MCF 10A (cell line): ENCODE measurements at regions of chr4 and their contacts with region 1.

Region 1: DNA sequence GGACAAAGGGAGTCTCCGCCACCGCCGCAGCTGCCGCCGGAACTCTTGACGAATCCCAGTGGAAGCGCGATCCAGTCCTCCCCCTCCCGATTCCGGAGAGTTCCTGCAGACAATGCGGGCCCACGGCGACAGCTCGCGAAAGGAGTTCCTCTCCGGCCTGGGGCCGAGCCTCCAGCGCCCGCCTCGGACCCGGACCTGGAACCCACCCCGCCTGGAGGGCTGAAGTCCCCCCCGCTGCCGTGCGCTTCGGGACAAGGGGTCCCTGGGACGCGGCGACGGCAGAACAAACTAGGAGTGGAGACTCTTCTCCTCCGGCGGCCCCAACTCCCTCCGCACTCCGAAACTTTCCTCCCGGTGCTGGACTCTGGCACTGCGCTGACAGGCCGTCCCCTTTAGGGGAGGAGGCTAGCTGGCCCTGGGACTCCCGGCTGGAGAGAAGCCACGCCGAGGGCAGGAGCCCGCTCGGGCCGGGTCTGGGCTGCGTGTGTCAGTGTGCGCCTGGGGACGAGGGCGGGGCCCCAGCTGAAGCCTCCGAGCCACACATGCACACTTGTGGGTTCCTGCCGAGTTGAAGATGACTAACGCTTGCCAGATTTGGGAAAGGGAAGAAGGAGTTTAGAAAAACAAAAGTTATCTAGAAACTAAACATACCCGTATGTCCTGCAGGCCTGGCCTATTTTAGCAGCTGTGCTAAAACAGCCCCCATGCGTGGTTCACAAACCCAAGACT is at the start of gene ANTXR2:
- DNase-seq: peak; percentile 95
- H3K4me3 Mint-ChIP-seq: peak within 1 kb of the TSS; percentile 98
- H3K27ac Mint-ChIP-seq: peak within 1 kb of the TSS; percentile 92
- H3K4me1 Mint-ChIP-seq: peaks cover 34% of the 10 kb centered on the region
- H3K27me3 Mint-ChIP-seq: no peaks in the 10 kb centered on the region
- CTCF ChIP-seq: no peak
- total RNA-seq, gene ANTXR2: 31.0 and 45.1 TPM in 2 replicates

Region 2: GRCh38 chr4:79917246-79917645 is 155.7 kb before region 1 on chr4:
- CTCF ChIA-PET with region 1: interaction called, 4 read pairs
- POLR2A ChIA-PET with region 1: no interaction called
- intact Hi-C with region 1: loop called (anchors 2 kb)
- DNase-seq: peak; percentile 53
- H3K4me3 Mint-ChIP-seq: no peak overlapping the region
- H3K27ac Mint-ChIP-seq: no peak overlapping the region
- H3K4me1 Mint-ChIP-seq: no peaks in the 10 kb centered on the region
- H3K27me3 Mint-ChIP-seq: no peaks in the 10 kb centered on the region
- CTCF ChIP-seq: peak; percentile 56

Region 3: GRCh38 chr4:80045786-80046185 is 27.1 kb before region 1 on chr4:
- CTCF ChIA-PET with region 1: interaction called, 4 read pairs
- POLR2A ChIA-PET with region 1: interaction called, 31 read pairs
- intact Hi-C with region 1: no loop called
- DNase-seq: no peak
- H3K4me3 Mint-ChIP-seq: no peak overlapping the region
- H3K27ac Mint-ChIP-seq: peak overlapping the region; percentile 31
- H3K4me1 Mint-ChIP-seq: peaks cover 20% of the 10 kb centered on the region
- H3K27me3 Mint-ChIP-seq: no peaks in the 10 kb centered on the region
- CTCF ChIP-seq: no peak

Region 4: DNA sequence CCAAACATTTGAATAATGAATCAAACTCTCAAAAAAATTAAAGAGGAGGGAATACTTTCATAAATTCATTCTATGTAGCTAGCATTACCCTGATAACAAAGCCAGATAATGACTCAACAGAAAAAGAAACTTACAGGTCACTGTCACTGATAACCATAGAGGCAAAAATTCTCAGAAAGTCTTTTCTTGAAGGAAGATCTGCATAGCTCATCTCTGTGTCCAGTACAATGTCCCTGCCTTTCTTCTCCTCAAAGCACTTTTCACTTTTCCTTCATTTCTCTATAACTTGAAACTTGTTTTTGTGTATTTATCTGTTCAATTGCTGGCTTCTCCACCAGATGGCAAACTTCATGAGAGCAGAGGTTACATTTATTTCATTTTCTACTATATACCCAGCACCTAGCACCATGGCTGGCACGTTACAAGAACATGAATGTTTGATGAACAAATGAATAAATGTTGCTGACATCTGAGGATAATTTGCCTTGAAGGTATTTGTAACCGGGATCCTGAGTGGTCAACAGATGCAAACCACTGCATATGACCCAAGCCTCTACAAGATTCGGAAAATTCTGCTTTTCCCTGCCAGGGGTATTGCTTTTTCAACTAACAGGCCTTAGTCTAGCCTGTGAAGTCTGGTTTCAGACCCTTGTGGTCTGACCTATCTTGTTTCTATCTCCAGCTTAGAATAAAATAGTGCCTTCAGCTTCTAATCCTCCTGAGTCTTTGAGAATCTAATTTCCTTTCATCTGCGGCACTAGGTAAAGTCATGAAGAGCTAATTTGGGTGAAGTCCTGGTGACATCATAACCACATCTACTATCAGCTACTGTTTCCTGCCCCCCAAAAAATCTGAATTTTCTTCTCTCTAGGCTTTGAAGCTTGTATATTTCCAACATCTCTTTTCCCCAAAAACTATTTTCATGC is 52.6 kb after region 1 on chr4:
- CTCF ChIA-PET with region 1: interaction called, 4 read pairs
- POLR2A ChIA-PET with region 1: interaction called, 12 read pairs
- intact Hi-C with region 1: loop called (anchors 5 kb)
- DNase-seq: peak; percentile 61
- H3K4me3 Mint-ChIP-seq: no peak overlapping the region
- H3K27ac Mint-ChIP-seq: peak overlapping the region; percentile 70
- H3K4me1 Mint-ChIP-seq: peaks cover 36% of the 10 kb centered on the region
- H3K27me3 Mint-ChIP-seq: no peaks in the 10 kb centered on the region
- CTCF ChIP-seq: peak; percentile 53